AG04449 (cell line): ENCODE measurements at regions of chr17 and their contacts with region 1.

Region 1: DNA sequence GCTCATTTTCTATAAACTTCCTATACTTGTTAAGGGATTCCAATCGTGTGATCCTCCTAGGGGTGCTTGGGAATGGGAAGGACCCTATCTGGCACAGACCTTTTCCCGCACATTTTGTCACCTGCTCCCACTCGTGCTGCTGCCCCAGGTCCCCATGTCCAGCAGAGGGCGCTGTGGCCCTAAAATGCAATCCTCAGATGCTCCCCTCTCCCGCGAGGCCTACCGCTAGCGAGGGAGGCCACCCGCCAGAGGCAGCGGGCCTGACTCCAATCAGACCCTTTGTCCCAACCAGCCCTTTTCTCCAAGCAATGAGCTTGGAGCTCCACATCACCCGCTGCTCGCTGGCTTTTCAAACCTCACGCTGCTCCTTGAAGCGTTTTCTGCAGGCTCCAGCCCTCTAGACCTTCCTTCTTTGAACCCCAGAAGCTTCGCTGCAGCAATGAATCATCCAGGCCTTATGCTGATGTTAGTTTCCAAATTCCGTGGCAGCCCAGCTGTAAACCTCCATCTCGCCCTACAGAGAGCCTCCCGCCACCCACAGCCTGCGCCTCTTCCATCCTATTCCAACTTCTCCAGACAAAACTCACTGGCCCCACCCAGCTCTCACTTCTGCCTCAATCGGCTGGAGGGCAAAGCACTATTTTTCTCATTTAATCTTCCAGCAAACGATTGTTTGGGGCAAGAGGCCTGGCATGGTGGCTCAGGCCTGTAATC is 23.6 kb upstream of the FZD2 start:
- DNase-seq: no peak
- H3K4me3 ChIP-seq: peak overlapping the region; percentile 48
- CTCF ChIP-seq: peak; percentile 97

Region 2: DNA sequence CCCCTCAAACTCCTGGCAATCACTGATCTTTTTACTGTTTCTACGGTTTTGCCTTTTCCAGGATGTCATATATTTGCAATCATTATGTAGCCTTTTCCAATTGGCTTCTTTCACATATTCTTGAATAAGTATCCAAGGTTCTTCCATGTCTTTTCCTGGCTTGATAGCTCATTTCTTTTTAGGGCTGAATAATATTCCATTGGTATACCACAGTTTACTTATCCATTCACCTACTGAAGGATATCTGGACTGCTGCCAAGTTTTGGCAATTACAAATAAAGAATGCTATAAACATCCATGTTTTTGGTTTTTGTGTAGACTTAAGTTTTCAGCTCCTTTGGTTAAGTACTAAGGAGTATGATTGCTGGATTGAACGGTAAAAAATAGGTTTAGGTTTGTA is 46.5 kb before region 1 on chr17:
- CTCF ChIA-PET with region 1: no interaction called
- POLR2A ChIA-PET with region 1: no interaction called
- DNase-seq: no peak
- H3K4me3 ChIP-seq: no peak overlapping the region
- CTCF ChIP-seq: no peak

Region 3: GRCh38 chr17:44565866-44566443 is 32.3 kb after region 1 on chr17:
- CTCF ChIA-PET with region 1: interaction called, 82 read pairs
- POLR2A ChIA-PET with region 1: interaction called, 11 read pairs
- DNase-seq: no peak
- H3K4me3 ChIP-seq: no peak overlapping the region
- CTCF ChIP-seq: peak; percentile 40

Region 4: GRCh38 chr17:44607836-44608690 is 74.4 kb after region 1 on chr17:
- CTCF ChIA-PET with region 1: interaction called, 40 read pairs
- POLR2A ChIA-PET with region 1: no interaction called
- DNase-seq: no peak
- H3K4me3 ChIP-seq: no peak overlapping the region; the same call in 1 of the 2 replicates
- CTCF ChIP-seq: no peak

Region 5: GRCh38 chr17:44642834-44643233 is 109.1 kb after region 1 on chr17:
- CTCF ChIA-PET with region 1: interaction called, 195 read pairs
- POLR2A ChIA-PET with region 1: no interaction called
- DNase-seq: no peak
- H3K4me3 ChIP-seq: no peak overlapping the region
- CTCF ChIP-seq: no peak

Region 6: GRCh38 chr17:44672479-44673093 is 138.9 kb after region 1 on chr17:
- CTCF ChIA-PET with region 1: interaction called, 46 read pairs
- POLR2A ChIA-PET with region 1: no interaction called
- DNase-seq: no peak
- H3K4me3 ChIP-seq: no peak overlapping the region
- CTCF ChIP-seq: peak; percentile 35